ENCODE measurements at regions of chr5 and their contacts with region 1.

Region 1: GRCh38 chr5:177497292-177498033 is at the start of gene PDLIM7:
- DNase-seq: peak; percentile 99
- H3K27ac ChIP-seq: peak within 1 kb of the TSS; percentile 96
- CTCF ChIP-seq: no peak; the same call in 1 of the 2 replicates

Region 2: GRCh38 chr5:177509381-177509951 is 12.0 kb after region 1 on chr5 and contains the start of gene DOK3:
- CTCF ChIA-PET with region 1: interaction called, 13 read pairs
- POLR2A ChIA-PET with region 1: interaction called, 7 read pairs
- DNase-seq: no peak
- H3K27ac ChIP-seq: peak within 1 kb of the TSS; percentile 33
- CTCF ChIP-seq: no peak

Region 3: GRCh38 chr5:177516604-177517568 is 19.4 kb after region 1 on chr5 and contains the start of gene DDX41:
- CTCF ChIA-PET with region 1: interaction called, 21 read pairs
- POLR2A ChIA-PET with region 1: no interaction called
- DNase-seq: peak; percentile 99
- H3K27ac ChIP-seq: peak within 1 kb of the TSS; percentile 91
- CTCF ChIP-seq: no peak

Measured in RWPE1 (cell line).